ENCODE measurements at regions of chr10 and their contacts with region 1.

Region 1: GRCh38 chr10:22340362-22341189 is 4.7 kb upstream of the SPAG6 start:
- DNase-seq: peak; percentile 91
- H3K4me3 Mint-ChIP-seq: peak overlapping the region; percentile 77
- H3K27ac Mint-ChIP-seq: peak overlapping the region; percentile 92
- H3K4me1 Mint-ChIP-seq: peaks cover 40% of the 10 kb centered on the region
- H3K27me3 Mint-ChIP-seq: peaks cover 68% of the 10 kb centered on the region

Region 2: GRCh38 chr10:21495752-21496342 is 844.7 kb before region 1 on chr10:
- intact Hi-C with region 1: loop called (anchors 5 kb)
- DNase-seq: peak; percentile 97
- H3K4me3 Mint-ChIP-seq: peak overlapping the region; percentile 89
- H3K27ac Mint-ChIP-seq: peak overlapping the region; percentile 45
- H3K4me1 Mint-ChIP-seq: peaks cover 17% of the 10 kb centered on the region
- H3K27me3 Mint-ChIP-seq: peaks cover 74% of the 10 kb centered on the region

Region 3: GRCh38 chr10:21525367-21526183 is 815.0 kb before region 1 on chr10 and contains the start of gene SKIDA1:
- intact Hi-C with region 1: loop called (anchors 2 kb)
- DNase-seq: peak; percentile 87
- H3K4me3 Mint-ChIP-seq: peak within 1 kb of the TSS; percentile 85
- H3K27ac Mint-ChIP-seq: peak within 1 kb of the TSS; percentile 95
- H3K4me1 Mint-ChIP-seq: peaks cover 29% of the 10 kb centered on the region
- H3K27me3 Mint-ChIP-seq: peaks cover 48% of the 10 kb centered on the region
- total RNA-seq, gene SKIDA1: 0.02 and 0.16 TPM in 2 replicates

Region 4: DNA sequence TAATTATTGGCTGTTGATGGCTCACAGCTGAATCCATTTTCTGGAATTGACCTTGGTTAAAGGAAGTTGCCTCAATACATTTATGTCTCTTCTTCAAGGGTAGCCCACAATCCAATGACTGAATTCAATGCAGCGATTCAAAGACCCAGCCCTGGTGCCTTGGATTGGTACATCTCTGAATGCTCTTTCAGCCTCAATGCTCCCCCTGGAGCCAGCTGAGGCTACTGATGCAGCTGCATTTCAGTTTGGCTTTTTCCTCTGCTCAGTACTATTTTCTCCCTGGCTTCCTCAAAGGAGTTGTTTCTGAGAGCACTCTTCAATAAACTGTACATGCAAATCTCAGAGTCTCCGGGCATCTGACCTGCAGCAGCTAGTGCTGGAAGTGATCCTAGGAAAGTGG is 122.1 kb before region 1 on chr10:
- intact Hi-C with region 1: no loop called
- DNase-seq: no peak
- H3K4me3 Mint-ChIP-seq: no peak overlapping the region
- H3K27ac Mint-ChIP-seq: no peak overlapping the region
- H3K4me1 Mint-ChIP-seq: peaks cover 14% of the 10 kb centered on the region
- H3K27me3 Mint-ChIP-seq: peaks cover 2% of the 10 kb centered on the region

Region 5: DNA sequence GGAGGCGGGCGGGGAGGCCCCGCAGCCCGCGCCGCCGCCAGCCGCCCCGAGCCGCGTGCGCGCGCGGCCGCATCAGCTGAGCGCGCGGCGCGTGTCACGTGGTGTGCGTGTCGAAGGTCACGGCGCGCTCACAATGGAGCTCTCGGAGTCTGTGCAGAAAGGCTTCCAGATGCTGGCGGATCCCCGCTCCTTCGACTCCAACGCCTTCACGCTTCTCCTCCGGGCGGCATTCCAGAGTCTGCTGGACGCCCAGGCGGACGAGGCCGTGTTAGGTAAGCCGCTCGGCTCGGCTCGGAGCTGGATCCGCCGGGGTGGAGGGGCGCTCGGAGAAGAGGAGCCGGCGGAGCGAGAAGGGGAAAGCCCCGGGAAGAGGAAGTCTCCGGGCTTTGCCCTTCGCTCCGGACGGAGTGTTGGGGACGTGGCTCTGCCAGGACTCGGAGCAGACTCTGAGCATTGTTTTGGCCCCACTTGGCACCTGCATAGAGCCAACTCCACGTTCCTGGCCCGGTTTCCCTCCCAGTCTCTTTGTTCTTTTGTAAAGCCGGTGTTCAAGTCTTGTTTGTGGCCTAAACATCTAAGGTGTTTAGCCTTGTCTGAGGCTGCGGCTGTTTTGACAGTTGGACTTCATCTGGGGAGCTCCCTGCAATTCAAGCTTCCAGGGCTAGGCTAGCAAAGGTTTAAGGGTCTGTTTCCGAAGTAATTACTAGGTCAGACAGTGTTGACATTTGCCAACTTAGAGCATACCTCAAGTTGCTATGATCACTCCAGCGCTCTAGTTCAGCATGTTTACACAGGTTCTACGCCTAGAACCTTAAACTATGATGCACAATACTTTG is 24.1 kb before region 1 on chr10 and contains the start of gene COMMD3:
- intact Hi-C with region 1: loop called (anchors 1 kb)
- DNase-seq: peak; percentile 95
- H3K4me3 Mint-ChIP-seq: peak within 1 kb of the TSS; percentile 87
- H3K27ac Mint-ChIP-seq: peak within 1 kb of the TSS; percentile 94
- H3K4me1 Mint-ChIP-seq: peaks cover 29% of the 10 kb centered on the region
- H3K27me3 Mint-ChIP-seq: no peaks in the 10 kb centered on the region
- total RNA-seq, gene COMMD3: 76.7 and 79.7 TPM in 2 replicates

Region 6: GRCh38 chr10:22379059-22379458 is 38.5 kb after region 1 on chr10:
- intact Hi-C with region 1: loop called (anchors 2 kb)
- DNase-seq: peak; percentile 74
- H3K4me3 Mint-ChIP-seq: peak overlapping the region; percentile 10
- H3K27ac Mint-ChIP-seq: peak overlapping the region; percentile 74
- H3K4me1 Mint-ChIP-seq: peaks cover 17% of the 10 kb centered on the region
- H3K27me3 Mint-ChIP-seq: peaks cover 4% of the 10 kb centered on the region

Region 7: GRCh38 chr10:22988581-22989360 is 648.2 kb after region 1 on chr10:
- intact Hi-C with region 1: loop called (anchors 5 kb)
- DNase-seq: peak; percentile 92
- H3K4me3 Mint-ChIP-seq: no peak overlapping the region
- H3K27ac Mint-ChIP-seq: no peak overlapping the region
- H3K4me1 Mint-ChIP-seq: peaks cover 8% of the 10 kb centered on the region
- H3K27me3 Mint-ChIP-seq: peaks cover 20% of the 10 kb centered on the region